Spleen (tissue), 13 donors: ENCODE measurements at regions of chr6 and their contacts with region 1.

Region 1: DNA sequence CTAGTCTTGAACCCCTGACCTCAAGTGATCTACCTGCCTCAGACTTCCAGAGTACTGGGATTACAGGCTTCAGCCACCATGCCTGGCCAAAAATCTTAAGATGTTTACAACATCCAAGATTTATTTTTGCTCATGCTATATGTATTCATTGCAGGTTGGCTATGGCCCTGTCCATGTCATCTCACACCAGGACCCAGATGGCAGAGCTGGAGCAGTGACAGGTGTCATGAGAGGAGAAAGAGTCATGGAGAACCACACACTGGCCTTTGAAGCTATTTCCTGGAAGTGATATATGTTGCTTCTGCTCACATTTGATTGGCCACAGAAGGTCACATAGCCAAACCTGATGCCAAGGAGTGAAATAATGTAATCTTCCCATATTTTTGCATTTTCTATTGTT is 13.8 kb upstream of the DDR1 start:
- DNase-seq: no peak
- H3K4me3 ChIP-seq: no peak overlapping the region
- H3K27ac ChIP-seq: no peak overlapping the region
- H3K4me1 ChIP-seq: no peaks in the 10 kb centered on the region
- H3K27me3 ChIP-seq: no peaks in the 10 kb centered on the region
- CTCF ChIP-seq: no peak
- POLR2A ChIP-seq: no peak

Region 2: GRCh38 chr6:30836431-30836866 is 34.1 kb before region 1 on chr6:
- intact Hi-C with region 1: loop called (anchors 5 kb)
- DNase-seq: no peak
- H3K4me3 ChIP-seq: no peak overlapping the region
- H3K27ac ChIP-seq: peak overlapping the region in 1 of 8 donors; percentile 22
- H3K4me1 ChIP-seq: peaks cover 0 to 53% (median 18%) of the 10 kb centered on the region in 6 donors
- H3K27me3 ChIP-seq: no peaks in the 10 kb centered on the region
- CTCF ChIP-seq: no peak
- POLR2A ChIP-seq: no peak

Region 3: DNA sequence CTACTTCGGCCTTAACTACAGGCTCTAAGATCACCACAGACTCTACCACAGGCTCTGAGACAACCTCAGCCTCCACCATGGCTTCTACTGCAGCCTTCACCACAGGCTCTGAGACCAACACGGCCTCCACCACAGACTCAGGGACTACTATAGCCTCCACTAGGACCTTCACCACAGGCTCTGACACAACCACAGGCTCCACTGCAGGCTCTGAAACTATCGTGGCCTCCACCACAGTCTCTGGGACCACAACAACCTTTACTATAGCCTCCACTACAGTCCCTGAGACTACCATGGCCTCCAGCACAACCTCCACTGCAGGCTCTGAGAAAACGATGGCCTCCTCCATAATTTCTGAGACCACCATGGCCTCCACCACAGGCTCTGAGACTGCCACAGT is 155.0 kb after region 1 on chr6:
- intact Hi-C with region 1: no loop called
- DNase-seq: no peak
- H3K4me3 ChIP-seq: no peak overlapping the region
- H3K27ac ChIP-seq: no peak overlapping the region
- H3K4me1 ChIP-seq: no peaks in the 10 kb centered on the region
- H3K27me3 ChIP-seq: peaks cover 0 to 45% (median 0%) of the 10 kb centered on the region in 7 donors
- CTCF ChIP-seq: no peak
- POLR2A ChIP-seq: no peak

Region 4: DNA sequence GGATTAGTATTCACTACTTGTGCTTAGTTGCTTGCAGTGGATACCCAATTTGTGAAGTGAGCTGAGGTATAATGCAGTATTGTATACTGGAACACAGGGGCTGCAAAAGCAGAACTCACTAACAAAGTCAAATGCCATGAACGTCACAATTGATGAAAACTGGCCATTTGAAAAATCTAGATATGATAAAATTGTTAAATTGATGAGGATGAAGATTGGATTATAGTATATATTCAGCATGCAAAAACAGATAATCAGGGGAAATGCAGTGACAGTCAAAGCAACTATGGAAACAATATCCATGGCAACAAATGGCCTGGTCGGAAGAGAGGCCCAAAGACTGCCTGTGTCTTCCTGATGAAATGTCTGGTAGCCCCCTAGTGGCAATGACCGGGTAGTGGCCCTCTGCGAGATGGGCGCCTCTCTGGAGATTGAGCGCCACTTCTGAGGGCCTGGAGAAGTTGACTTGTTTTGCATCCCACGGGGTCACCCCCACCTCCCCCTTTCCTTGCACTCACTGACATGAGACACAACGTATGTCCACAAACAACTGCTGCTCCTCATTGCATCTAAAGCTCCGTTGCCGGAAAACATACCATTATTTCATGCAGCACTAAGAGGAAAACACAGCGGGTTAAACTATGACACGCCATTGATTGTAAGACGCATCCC is 198.3 kb after region 1 on chr6:
- intact Hi-C with region 1: no loop called
- DNase-seq: peak; percentile 87
- H3K4me3 ChIP-seq: no peak overlapping the region
- H3K27ac ChIP-seq: no peak overlapping the region
- H3K4me1 ChIP-seq: peaks cover 0 to 9% (median 0%) of the 10 kb centered on the region in 6 donors
- H3K27me3 ChIP-seq: no peaks in the 10 kb centered on the region
- CTCF ChIP-seq: peak; percentile 77 to 98 (median 91)
- POLR2A ChIP-seq: no peak